ENCODE measurements at regions of chr2 and their contacts with region 1.

Region 1: DNA sequence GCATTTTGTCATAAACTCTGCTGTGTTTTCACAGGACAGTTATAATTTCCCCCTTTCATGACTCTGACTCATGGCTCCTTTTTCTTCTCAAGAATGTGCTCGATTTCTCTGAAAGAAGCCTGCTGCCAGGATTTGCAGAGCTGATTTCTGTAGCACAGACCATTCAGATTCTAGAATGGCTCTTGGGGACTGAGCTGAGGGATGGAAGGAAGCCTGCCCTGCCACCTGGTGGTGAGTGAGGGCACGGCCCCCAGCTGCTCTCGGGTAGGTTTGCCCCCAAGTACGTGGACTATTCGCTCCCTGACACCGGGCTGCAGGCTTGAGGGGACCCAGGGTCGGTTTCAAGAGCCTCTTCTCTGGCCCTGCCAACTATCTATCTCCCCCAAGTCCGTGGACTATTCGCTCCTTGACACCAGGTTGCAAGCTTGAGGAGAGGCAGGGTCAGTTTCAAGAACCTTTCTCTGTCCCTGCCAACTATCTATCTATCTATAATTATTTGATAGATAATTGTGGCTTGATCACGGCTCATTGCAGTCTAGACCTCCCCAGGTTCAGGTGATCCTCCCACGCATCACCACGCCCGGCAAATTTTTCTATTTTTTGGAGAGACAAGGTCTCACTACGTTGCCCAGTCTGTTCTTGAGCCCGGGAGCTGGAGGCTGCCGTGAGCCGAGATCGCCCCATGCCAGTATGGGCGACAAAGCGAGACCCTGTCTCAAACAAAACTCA is 1.4 kb upstream of the SMYD5 start:
- DNase-seq: peak; percentile 80
- ATAC-seq: peak; percentile 58
- H3K4me3 ChIP-seq: peak overlapping the region in 1 of 5 experiments; percentile 15
- H3K4me3 Mint-ChIP-seq: peak overlapping the region; percentile 66
- H3K27ac ChIP-seq: no peak overlapping the region
- H3K27ac Mint-ChIP-seq: peak overlapping the region; percentile 50
- H3K4me1 ChIP-seq: peaks cover 17 to 22% of the 10 kb centered on the region in 2 donors
- H3K4me1 Mint-ChIP-seq: peaks cover 31% of the 10 kb centered on the region
- H3K27me3 ChIP-seq: peaks cover 0 to 9% (median 0%) of the 10 kb centered on the region in 4 experiments
- H3K27me3 Mint-ChIP-seq: peaks cover 23% of the 10 kb centered on the region
- CTCF ChIP-seq: peak; percentile 94

Region 2: DNA sequence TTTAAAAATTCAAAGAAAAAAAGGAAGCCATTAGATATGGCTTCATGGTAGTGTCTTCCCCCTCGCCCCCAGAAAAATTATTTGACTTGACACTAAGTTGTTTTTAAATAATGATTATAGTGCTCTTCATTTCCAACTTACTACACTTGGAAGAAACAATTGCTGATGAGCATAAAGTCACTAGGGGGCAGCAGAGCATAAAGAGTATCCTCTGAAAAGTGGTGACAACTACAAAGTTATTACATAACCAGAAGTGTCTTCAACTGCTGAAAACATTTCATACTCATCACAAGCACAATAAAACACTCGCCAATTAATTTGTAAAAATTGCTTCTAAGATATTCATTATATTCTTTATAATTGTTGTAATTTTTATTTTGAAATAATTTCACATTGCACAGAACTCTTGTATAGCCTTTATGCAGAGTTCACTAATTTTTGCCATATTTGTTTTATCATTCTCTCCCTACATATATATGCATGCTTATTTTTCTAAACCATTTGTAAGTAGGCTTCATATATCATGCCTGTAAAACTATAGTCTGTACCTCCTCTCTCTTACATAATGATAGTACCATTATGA is 441.6 kb before region 1 on chr2:
- CTCF ChIA-PET with region 1: no interaction called
- POLR2A ChIA-PET with region 1: no interaction called
- intact Hi-C with region 1: loop called (anchors 2 kb)
- DNase-seq: peak; percentile 72
- ATAC-seq: no peak
- H3K4me3 ChIP-seq: no peak overlapping the region
- H3K4me3 Mint-ChIP-seq: no peak overlapping the region
- H3K27ac ChIP-seq: no peak overlapping the region
- H3K27ac Mint-ChIP-seq: no peak overlapping the region
- H3K4me1 ChIP-seq: no peaks in the 10 kb centered on the region
- H3K4me1 Mint-ChIP-seq: no peaks in the 10 kb centered on the region
- H3K27me3 ChIP-seq: no peaks in the 10 kb centered on the region
- H3K27me3 Mint-ChIP-seq: no peaks in the 10 kb centered on the region
- CTCF ChIP-seq: peak; percentile 97

Region 3: DNA sequence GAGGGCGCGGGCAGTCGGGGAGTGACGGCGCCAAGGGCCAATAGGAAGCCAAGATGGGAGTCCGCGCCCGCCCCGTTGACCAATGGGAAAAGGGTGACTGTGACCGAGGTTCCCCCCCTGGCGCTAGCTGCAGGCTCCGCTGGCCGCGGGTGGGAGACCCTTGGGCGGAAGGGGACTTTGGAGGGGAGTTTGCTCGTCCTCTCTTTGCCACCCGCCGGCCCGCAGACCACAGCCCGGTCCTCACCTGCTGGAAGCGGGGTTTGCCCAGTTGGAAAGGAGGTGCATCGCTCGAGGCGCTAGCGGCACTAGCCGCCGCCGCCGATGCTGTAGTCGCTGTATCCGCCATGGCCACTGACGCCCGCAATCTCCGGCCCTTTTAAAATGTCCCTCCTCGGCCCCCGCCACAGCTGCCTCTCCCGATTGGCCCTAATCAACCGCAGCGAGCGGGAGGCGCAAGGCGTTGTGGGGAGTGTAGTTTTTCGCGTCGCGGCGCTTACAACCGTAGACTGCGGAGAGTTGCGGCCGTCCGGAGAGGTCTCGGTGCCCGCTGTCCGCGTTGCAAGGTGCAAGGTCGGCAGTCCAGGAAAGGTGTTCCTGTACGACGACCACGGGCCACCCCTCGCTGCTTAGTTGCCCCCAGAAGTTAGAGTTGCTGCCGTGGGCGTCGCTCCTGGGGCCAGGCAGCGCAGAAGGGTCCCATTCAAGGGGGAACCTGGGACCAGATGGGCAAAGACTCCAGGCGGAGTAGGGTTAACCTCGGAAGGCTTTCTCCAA is 141.1 kb before region 1 on chr2 and contains the start of gene SFXN5:
- CTCF ChIA-PET with region 1: interaction called, 11 read pairs
- POLR2A ChIA-PET with region 1: no interaction called
- intact Hi-C with region 1: loop called (anchors 1 kb)
- DNase-seq: peak; percentile 98
- ATAC-seq: peak; percentile 90
- H3K4me3 ChIP-seq: peak within 1 kb of the TSS; percentile 51 to 99 (median 86)
- H3K4me3 Mint-ChIP-seq: peak within 1 kb of the TSS; percentile 93
- H3K27ac ChIP-seq: peak within 1 kb of the TSS; percentile 77 to 84
- H3K27ac Mint-ChIP-seq: peak within 1 kb of the TSS; percentile 95
- H3K4me1 ChIP-seq: peaks cover 6 to 17% of the 10 kb centered on the region in 2 donors
- H3K4me1 Mint-ChIP-seq: peaks cover 24% of the 10 kb centered on the region
- H3K27me3 ChIP-seq: no peaks in the 10 kb centered on the region
- H3K27me3 Mint-ChIP-seq: no peaks in the 10 kb centered on the region
- CTCF ChIP-seq: no peak
- total RNA-seq, gene SFXN5: 16.9 and 17.8 TPM in 2 replicates

Region 4: GRCh38 chr2:73112913-73113633 is 99.5 kb before region 1 on chr2 and contains the start of gene RAB11FIP5:
- CTCF ChIA-PET with region 1: interaction called, 3 read pairs
- POLR2A ChIA-PET with region 1: no interaction called
- intact Hi-C with region 1: loop called (anchors 1 kb)
- DNase-seq: peak; percentile 83
- ATAC-seq: peak; percentile 91
- H3K4me3 ChIP-seq: peak within 1 kb of the TSS; percentile 15 to 89 (median 74)
- H3K4me3 Mint-ChIP-seq: peak within 1 kb of the TSS; percentile 83
- H3K27ac ChIP-seq: peak within 1 kb of the TSS in 1 of 2 donors; percentile 53
- H3K27ac Mint-ChIP-seq: peak within 1 kb of the TSS; percentile 67
- H3K4me1 ChIP-seq: peaks cover 17% of the 10 kb centered on the region in 2 donors
- H3K4me1 Mint-ChIP-seq: peaks cover 8% of the 10 kb centered on the region
- H3K27me3 ChIP-seq: peaks cover 0 to 23% (median 8%) of the 10 kb centered on the region in 4 experiments
- H3K27me3 Mint-ChIP-seq: peaks cover 3% of the 10 kb centered on the region
- CTCF ChIP-seq: no peak
- total RNA-seq, gene RAB11FIP5: 4.6 and 5.1 TPM in 2 replicates

Region 5: DNA sequence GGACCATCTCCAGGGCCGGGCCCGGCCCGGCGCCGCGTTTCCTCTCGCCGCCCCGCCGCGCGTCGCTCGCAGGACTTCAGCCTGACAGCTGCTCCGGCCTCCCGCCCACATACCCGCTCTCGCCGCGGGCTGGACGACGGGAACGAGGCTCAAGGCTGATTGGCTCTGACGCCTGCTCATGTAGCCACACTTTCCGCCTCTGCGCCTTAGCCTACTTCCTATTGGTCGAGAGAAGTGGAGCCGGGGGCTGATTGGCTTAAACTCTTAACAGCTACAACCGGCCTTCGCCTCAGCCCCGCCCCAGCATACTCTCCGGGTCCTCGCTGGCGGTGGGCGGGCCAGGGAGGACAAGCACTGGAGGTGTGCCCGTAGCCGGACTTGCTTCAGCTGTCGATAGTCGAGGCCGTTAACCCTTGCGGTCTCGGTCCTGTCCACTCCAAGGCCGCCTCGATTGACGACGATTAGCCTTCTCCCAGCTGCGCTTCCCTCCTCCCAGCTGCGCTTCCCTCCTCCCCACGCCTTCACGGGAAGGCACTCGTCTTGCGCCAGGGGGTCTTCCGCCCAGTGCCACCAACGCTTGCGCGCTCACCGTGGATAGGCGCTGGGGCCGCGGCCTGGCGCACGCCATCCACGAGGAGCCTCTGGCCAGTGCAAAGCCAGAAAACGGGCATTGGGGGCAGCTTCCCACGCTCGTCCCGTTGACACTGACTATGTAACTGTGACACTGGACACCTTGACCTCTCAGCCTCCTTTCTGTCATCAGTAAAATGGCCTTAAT is 20.7 kb after region 1 on chr2 and contains the start of gene PRADC1:
- CTCF ChIA-PET with region 1: interaction called, 24 read pairs
- POLR2A ChIA-PET with region 1: interaction called, 9 read pairs
- intact Hi-C with region 1: loop called (anchors 1 kb)
- DNase-seq: peak; percentile 97
- ATAC-seq: peak; percentile 85
- H3K4me3 ChIP-seq: peak within 1 kb of the TSS; percentile 89 to 99 (median 94)
- H3K4me3 Mint-ChIP-seq: peak within 1 kb of the TSS; percentile 99
- H3K27ac ChIP-seq: peak within 1 kb of the TSS; percentile 87 to 90
- H3K27ac Mint-ChIP-seq: peak within 1 kb of the TSS; percentile 93
- H3K4me1 ChIP-seq: peaks cover 18 to 20% of the 10 kb centered on the region in 2 donors
- H3K4me1 Mint-ChIP-seq: peaks cover 38% of the 10 kb centered on the region
- H3K27me3 ChIP-seq: no peaks in the 10 kb centered on the region
- H3K27me3 Mint-ChIP-seq: no peaks in the 10 kb centered on the region
- CTCF ChIP-seq: no peak
- total RNA-seq, gene PRADC1: 2.3 and 4.2 TPM in 2 replicates

Region 6: DNA sequence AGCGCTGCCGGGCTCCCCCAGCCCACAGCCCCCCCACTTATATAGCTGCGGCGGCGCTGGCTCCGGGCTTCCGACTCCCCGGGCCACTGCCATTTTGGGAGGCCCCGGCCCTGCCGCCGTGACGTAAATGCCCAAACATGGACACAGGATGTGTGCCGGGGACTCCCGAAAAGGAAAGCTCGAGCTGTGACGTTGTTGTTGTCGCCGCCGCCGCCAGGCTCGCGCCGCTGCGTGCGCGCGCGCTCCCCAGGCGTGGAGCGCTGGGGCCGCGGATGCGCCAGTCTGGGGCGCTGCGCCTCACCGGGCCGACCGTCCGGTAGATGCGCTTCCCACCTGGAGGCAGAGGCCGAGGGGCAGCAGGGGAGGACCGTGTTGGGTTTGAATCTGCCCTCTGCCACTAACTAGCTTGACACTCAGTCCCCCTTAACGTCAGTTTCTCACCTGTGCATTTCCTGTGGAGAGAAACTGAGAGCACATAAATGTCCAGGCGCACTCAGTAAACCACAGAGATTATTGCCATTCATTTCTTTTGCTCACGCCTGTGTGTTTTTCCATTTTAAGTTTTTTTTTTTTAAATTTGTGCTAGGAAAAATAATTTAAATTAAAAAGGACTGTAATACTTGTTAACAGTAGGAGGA is 81.0 kb after region 1 on chr2 and contains the start of gene EGR4:
- CTCF ChIA-PET with region 1: interaction called, 14 read pairs
- POLR2A ChIA-PET with region 1: no interaction called
- intact Hi-C with region 1: no loop called
- DNase-seq: peak; percentile 91
- ATAC-seq: peak; percentile 81
- H3K4me3 ChIP-seq: peak within 1 kb of the TSS; percentile 0 to 55 (median 46)
- H3K4me3 Mint-ChIP-seq: peak within 1 kb of the TSS; percentile 81
- H3K27ac ChIP-seq: no peak within 1 kb of the TSS
- H3K27ac Mint-ChIP-seq: peak within 1 kb of the TSS; percentile 70
- H3K4me1 ChIP-seq: peaks cover 28 to 37% of the 10 kb centered on the region in 2 donors
- H3K4me1 Mint-ChIP-seq: peaks cover 22% of the 10 kb centered on the region
- H3K27me3 ChIP-seq: peaks cover 2 to 73% (median 64%) of the 10 kb centered on the region in 4 experiments
- H3K27me3 Mint-ChIP-seq: peaks cover 58% of the 10 kb centered on the region
- CTCF ChIP-seq: no peak
- total RNA-seq, gene EGR4: 0.30 and 0.41 TPM in 2 replicates

Region 7: GRCh38 chr2:73736855-73737779 is 524.5 kb after region 1 on chr2 and contains the start of gene TPRKB:
- CTCF ChIA-PET with region 1: no interaction called
- POLR2A ChIA-PET with region 1: no interaction called
- intact Hi-C with region 1: loop called (anchors 5 kb)
- DNase-seq: peak; percentile 95
- ATAC-seq: peak; percentile 99
- H3K4me3 ChIP-seq: peak within 1 kb of the TSS; percentile 68 to 97 (median 88)
- H3K4me3 Mint-ChIP-seq: peak within 1 kb of the TSS; percentile 91
- H3K27ac ChIP-seq: peak within 1 kb of the TSS; percentile 59 to 78
- H3K27ac Mint-ChIP-seq: peak within 1 kb of the TSS; percentile 83
- H3K4me1 ChIP-seq: peaks cover 8 to 15% of the 10 kb centered on the region in 2 donors
- H3K4me1 Mint-ChIP-seq: peaks cover 16% of the 10 kb centered on the region
- H3K27me3 ChIP-seq: no peaks in the 10 kb centered on the region
- H3K27me3 Mint-ChIP-seq: no peaks in the 10 kb centered on the region
- CTCF ChIP-seq: no peak
- total RNA-seq, gene TPRKB: 24.3 and 31.2 TPM in 2 replicates

Measured in B cell (primary cell).